Activated naive CD4-positive, alpha-beta T cell treated with anti-CD3 and anti-CD28 coated beads for 36 hours (primary cell): ENCODE measurements at regions of chr7 and their contacts with region 1.

Region 1: GRCh38 chr7:123797673-123798527 is 47.1 kb upstream of the HYAL4 start:
- DNase-seq: no peak
- H3K4me3 Mint-ChIP-seq: no peak overlapping the region
- H3K27ac Mint-ChIP-seq: no peak overlapping the region
- H3K4me1 Mint-ChIP-seq: no peaks in the 10 kb centered on the region
- H3K27me3 Mint-ChIP-seq: no peaks in the 10 kb centered on the region

Region 2: GRCh38 chr7:123367031-123367430 is 430.9 kb before region 1 on chr7:
- CTCF ChIA-PET with region 1: no interaction called
- intact Hi-C with region 1: no loop called
- DNase-seq: no peak
- H3K4me3 Mint-ChIP-seq: no peak overlapping the region
- H3K27ac Mint-ChIP-seq: no peak overlapping the region
- H3K4me1 Mint-ChIP-seq: no peaks in the 10 kb centered on the region
- H3K27me3 Mint-ChIP-seq: no peaks in the 10 kb centered on the region

Region 3: GRCh38 chr7:123437447-123437995 is 360.4 kb before region 1 on chr7:
- CTCF ChIA-PET with region 1: no interaction called
- intact Hi-C with region 1: no loop called
- DNase-seq: no peak
- H3K4me3 Mint-ChIP-seq: no peak overlapping the region
- H3K27ac Mint-ChIP-seq: no peak overlapping the region
- H3K4me1 Mint-ChIP-seq: no peaks in the 10 kb centered on the region
- H3K27me3 Mint-ChIP-seq: no peaks in the 10 kb centered on the region

Region 4: DNA sequence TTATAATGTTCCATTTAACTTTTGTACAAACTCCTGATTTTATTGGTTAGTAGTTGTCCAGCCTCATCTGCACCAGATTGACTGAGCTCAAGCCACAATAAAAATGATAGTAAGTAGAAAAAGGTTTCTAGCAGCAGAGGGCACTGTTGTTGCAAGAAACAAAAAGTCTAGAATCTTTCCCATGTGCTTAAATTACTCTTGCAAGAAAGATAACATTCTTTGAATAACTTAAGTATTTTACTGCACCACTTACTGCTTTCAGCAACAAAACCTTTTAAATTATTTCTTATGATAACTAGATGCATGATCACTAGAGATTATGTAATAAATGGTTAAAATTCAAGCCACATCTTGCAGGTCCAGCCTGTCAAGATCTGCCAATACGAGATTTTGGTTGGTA is 115.2 kb before region 1 on chr7:
- CTCF ChIA-PET with region 1: interaction called, 13 read pairs
- intact Hi-C with region 1: loop called (anchors 2 kb)
- DNase-seq: peak; percentile 31
- H3K4me3 Mint-ChIP-seq: no peak overlapping the region
- H3K27ac Mint-ChIP-seq: no peak overlapping the region
- H3K4me1 Mint-ChIP-seq: no peaks in the 10 kb centered on the region
- H3K27me3 Mint-ChIP-seq: no peaks in the 10 kb centered on the region

Region 5: DNA sequence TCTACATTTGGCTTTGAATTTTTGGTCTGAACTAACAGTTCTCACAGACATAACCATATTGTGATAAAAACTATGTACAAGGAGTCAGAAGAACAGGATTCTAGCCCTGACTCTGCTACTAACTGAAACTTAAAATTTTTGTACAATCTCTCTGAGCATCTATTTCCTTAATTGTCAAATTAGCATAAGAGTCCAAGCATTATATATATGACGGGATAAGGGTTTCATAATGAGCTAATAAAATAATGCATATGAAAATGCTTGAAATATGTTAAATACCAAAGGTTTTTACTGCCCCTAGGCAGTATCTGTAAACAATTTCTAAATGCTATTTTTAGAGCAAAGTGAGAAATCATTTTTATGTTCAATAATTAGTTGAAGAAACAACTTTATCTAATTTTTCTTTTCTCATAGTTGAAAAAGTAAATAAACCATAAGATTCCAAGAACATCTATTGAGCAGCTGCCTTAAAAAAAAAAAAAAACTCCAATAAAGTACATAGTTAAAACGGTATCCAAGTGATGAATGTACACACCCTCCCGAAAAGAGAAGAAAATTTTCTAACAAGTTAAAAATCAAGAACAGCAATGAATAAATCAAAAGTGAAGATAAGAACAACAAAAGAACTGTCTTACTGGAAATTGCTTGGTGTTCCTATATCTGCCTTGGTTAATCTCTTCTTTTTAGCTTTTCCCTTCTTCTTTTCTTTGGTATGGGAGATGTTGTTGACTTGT is 101.8 kb before region 1 on chr7:
- CTCF ChIA-PET with region 1: no interaction called
- intact Hi-C with region 1: no loop called
- DNase-seq: no peak
- H3K4me3 Mint-ChIP-seq: no peak overlapping the region
- H3K27ac Mint-ChIP-seq: no peak overlapping the region
- H3K4me1 Mint-ChIP-seq: no peaks in the 10 kb centered on the region
- H3K27me3 Mint-ChIP-seq: no peaks in the 10 kb centered on the region

Region 6: GRCh38 chr7:123865517-123866117 is 67.7 kb after region 1 on chr7:
- CTCF ChIA-PET with region 1: interaction called, 106 read pairs
- intact Hi-C with region 1: loop called (anchors 1 kb)
- DNase-seq: peak; percentile 66
- H3K4me3 Mint-ChIP-seq: no peak overlapping the region
- H3K27ac Mint-ChIP-seq: no peak overlapping the region
- H3K4me1 Mint-ChIP-seq: no peaks in the 10 kb centered on the region
- H3K27me3 Mint-ChIP-seq: peaks cover 3% of the 10 kb centered on the region

Region 7: GRCh38 chr7:123916240-123916724 is 118.4 kb after region 1 on chr7:
- CTCF ChIA-PET with region 1: no interaction called
- intact Hi-C with region 1: loop called (anchors 1 kb)
- DNase-seq: no peak
- H3K4me3 Mint-ChIP-seq: no peak overlapping the region
- H3K27ac Mint-ChIP-seq: no peak overlapping the region
- H3K4me1 Mint-ChIP-seq: no peaks in the 10 kb centered on the region
- H3K27me3 Mint-ChIP-seq: peaks cover 6% of the 10 kb centered on the region

Region 8: DNA sequence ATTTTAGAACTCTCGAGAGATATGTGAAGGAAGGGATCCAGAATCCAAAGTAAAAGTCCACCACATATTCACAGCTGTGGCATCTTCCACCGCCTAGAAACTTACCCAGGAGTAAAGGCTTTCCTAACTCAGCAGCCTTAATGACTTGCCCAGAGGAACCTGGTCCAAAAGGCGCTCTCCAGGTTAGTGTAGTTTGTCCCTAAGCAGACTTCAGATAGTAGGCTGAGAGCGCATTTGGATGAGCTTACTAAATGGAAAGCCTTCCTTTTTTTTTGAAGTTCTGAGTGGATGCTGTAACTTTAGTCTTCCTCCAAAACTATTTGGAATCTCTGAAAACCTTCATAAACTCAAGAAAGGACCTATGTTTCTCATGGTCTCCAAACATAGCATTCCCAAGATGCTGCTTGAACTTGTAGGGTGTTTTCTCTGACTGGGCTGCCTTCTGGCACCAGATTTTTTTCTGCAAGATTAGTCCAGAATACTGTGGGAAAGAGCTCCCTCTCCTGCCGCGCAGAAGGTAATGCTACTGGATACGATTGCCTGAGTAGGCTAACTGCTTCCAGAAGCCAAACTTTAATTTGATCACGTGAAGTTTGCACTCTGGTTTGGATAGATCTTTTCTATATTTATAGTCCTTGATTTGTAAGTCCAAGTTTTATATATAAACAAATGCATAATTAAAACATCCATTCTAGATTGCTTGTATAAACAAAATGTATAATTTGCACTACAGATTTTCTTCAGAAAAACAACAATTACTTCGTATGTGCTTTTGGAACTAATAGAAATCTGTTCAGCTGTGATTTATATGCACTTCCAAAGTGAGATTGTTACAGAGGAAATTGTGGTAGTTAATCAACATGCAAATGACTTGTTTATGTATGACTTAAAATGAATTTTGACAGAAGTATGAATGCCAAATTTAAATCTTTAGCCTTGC is 987.2 kb after region 1 on chr7:
- CTCF ChIA-PET with region 1: no interaction called
- intact Hi-C with region 1: loop called (anchors 5 kb)
- DNase-seq: peak; percentile 32
- H3K4me3 Mint-ChIP-seq: no peak overlapping the region
- H3K27ac Mint-ChIP-seq: no peak overlapping the region
- H3K4me1 Mint-ChIP-seq: no peaks in the 10 kb centered on the region
- H3K27me3 Mint-ChIP-seq: peaks cover 28% of the 10 kb centered on the region